Cardiac septum (tissue), 1 donor: ENCODE measurements at regions of chr13 and their contacts with region 1.

Region 1: GRCh38 chr13:101942038-101942437 is 459.8 kb downstream of the FGF14 start:
- DNase-seq: no peak

Region 2: DNA sequence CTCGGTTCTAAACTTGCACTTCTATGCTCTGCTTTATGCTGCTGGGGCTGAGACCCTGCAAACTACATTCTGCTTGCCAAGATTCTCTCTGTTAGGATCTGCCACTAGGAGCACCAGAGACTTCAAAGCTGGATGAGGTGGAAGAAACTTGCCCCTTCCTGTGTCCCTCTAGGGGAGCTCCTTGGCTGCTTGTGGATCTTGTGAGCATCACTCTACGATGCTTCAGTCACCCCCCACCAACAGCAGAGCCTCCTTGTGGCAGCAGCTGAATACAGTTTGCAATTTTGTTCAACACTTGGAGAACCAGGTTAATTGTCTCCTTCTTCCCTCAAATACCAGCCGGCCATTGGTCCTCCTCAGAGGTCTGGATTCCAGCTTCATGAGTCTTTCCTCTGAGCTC is 149.2 kb after region 1 on chr13:
- intact Hi-C with region 1: loop called (anchors 10 kb)
- DNase-seq: no peak

Region 3: DNA sequence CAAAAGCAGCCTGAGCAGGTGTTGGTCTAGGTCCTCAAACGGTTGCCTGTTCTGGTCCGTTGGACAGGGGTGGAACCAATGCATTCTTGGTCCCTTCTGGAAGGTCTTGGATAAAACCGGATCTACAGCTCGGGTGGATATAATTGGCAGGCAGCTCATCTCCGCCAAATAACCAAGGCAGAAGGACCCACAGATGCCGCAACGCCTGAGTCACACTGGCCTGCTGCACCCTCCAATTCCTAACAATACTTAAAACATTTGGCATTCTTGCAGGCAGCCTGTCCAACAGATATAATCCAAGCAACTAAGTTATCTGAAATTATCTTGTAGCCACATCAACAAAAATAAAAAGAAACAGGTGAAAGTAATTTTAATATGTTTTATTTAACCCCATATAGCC is 518.8 kb after region 1 on chr13:
- intact Hi-C with region 1: loop called (anchors 2 kb)
- DNase-seq: no peak

Region 4: GRCh38 chr13:102555917-102556553 is 614.0 kb after region 1 on chr13:
- intact Hi-C with region 1: loop called (anchors 10 kb)
- DNase-seq: no peak